Activated T-helper 1 cell treated with anti-CD3 and anti-CD28 coated beads, Interleukin-12 subunit alpha, Interleukin-12 subunit beta, Interleukin-2, Interleukin-4 antibody, amounts not matched to agents 30 ng/mL and 10 ng/mL and 1 ng/mL, durations not matched to agents 14 hours and 24 hours and 36 hours (primary cell): ENCODE measurements at regions of chr2 and their contacts with region 1.

Region 1: GRCh38 chr2:152175458-152176325 is at the start of gene STAM2:
- DNase-seq: peak; percentile 91
- H3K4me3 Mint-ChIP-seq: peak within 1 kb of the TSS; percentile 95
- H3K27ac Mint-ChIP-seq: peak within 1 kb of the TSS; percentile 96
- H3K4me1 Mint-ChIP-seq: peaks cover 38% of the 10 kb centered on the region
- H3K27me3 Mint-ChIP-seq: peaks cover 3% of the 10 kb centered on the region
- total RNA-seq, gene STAM2: 18.6 and 20.0 TPM in 2 replicates

Region 2: GRCh38 chr2:152036611-152037469 is 138.9 kb before region 1 on chr2:
- intact Hi-C with region 1: loop called (anchors 1 kb)
- DNase-seq: peak; percentile 9
- H3K4me3 Mint-ChIP-seq: no peak overlapping the region
- H3K27ac Mint-ChIP-seq: no peak overlapping the region
- H3K4me1 Mint-ChIP-seq: no peaks in the 10 kb centered on the region
- H3K27me3 Mint-ChIP-seq: peaks cover 5% of the 10 kb centered on the region

Region 3: DNA sequence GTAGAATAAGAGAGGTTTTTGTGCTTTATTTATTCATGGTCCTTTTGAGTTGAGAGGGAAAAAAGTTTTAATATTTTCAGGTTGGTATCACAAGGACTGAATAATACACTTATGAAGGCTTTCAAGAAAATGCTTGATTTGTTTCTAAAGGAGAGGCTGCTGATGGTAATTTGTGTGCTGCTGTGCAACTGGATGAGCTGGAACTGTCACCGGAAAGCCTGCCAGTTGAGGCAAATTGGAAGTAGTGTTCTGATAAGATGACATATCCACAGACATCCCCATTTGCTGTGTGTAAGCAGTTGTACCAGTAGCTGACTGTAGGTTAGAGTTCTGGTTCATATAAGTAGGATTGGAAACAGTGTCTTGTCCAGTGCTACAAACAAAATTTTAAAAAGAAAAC is 55.3 kb before region 1 on chr2:
- intact Hi-C with region 1: no loop called
- DNase-seq: no peak
- H3K4me3 Mint-ChIP-seq: no peak overlapping the region
- H3K27ac Mint-ChIP-seq: no peak overlapping the region
- H3K4me1 Mint-ChIP-seq: no peaks in the 10 kb centered on the region
- H3K27me3 Mint-ChIP-seq: no peaks in the 10 kb centered on the region

Region 4: GRCh38 chr2:152134488-152135280 is 41.0 kb before region 1 on chr2:
- intact Hi-C with region 1: loop called (anchors 2 kb)
- DNase-seq: peak; percentile 5
- H3K4me3 Mint-ChIP-seq: no peak overlapping the region
- H3K27ac Mint-ChIP-seq: no peak overlapping the region
- H3K4me1 Mint-ChIP-seq: peaks cover 15% of the 10 kb centered on the region
- H3K27me3 Mint-ChIP-seq: no peaks in the 10 kb centered on the region

Region 5: DNA sequence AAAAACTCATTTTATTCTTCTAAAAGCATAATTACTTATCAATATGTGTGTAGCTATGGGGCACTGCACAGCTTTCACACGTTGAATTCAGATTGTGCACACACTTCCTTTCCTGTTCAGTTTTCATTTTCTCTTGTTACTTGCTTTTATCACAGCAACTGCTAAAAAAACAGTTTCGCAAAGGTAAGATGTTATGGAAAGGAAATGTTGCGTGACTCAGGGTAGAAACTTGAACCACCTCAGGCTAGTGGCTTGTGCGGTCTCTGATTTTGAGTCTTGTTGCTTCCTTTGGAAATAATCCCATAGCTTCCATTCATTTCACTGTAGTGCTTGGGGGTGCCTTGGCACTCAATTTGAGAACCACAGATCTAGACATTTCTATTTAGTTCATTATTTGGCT is 331.2 kb after region 1 on chr2:
- intact Hi-C with region 1: loop called (anchors 2 kb)
- DNase-seq: peak; percentile 6
- H3K4me3 Mint-ChIP-seq: no peak overlapping the region
- H3K27ac Mint-ChIP-seq: peak overlapping the region; percentile 63
- H3K4me1 Mint-ChIP-seq: peaks cover 20% of the 10 kb centered on the region
- H3K27me3 Mint-ChIP-seq: no peaks in the 10 kb centered on the region

Region 6: GRCh38 chr2:152635635-152636298 is 460.1 kb after region 1 on chr2:
- intact Hi-C with region 1: loop called (anchors 1 kb)
- DNase-seq: peak; percentile 51
- H3K4me3 Mint-ChIP-seq: no peak overlapping the region
- H3K27ac Mint-ChIP-seq: no peak overlapping the region
- H3K4me1 Mint-ChIP-seq: peaks cover 6% of the 10 kb centered on the region
- H3K27me3 Mint-ChIP-seq: peaks cover 2% of the 10 kb centered on the region